ENCODE measurements at regions of chr3 and their contacts with region 1.

Region 1: DNA sequence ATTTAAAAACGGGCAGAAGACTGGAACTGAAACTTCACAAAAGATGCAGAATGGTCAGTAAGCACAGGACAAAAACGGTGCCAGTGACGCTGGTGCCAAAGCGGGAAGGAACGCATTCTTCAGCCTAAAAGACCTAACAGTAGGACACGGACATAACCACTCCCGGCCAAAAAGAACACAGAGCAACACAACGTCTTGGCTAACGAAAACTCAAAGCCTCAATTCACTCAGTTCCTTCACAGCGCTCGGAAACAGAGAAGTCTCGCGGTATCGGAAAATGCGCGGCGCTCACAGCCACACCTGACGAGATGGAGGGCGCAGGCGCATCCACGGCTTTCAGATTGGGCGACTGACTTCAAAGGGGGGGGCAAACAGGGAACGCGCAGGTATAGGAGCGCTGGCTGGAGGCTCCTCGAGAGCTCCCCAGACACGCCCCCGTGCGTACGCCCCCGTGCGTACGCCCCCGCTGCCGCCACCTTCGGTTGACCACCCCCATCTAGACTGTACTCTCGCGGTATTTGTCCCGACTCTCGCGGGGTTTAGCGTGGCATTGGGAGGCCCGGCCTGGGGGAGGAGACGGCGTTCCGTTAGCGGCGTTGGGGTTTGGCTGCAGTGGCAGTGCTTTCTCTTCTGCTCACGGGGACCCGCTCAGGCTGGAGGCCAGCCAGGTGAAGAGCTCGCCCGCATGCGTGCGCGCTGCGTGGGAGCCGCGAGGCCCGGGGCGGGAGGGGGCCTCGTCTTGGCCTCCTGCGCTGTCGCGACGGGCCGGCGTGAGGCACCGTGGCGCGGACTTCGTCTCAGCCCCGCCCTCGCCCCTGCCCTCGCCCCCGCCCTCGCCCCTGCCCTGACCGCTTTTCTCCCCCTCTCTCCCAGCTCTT is at the start of gene NKTR:
- DNase-seq: peak; percentile 99
- ATAC-seq: peak; percentile 90
- total RNA-seq, gene NKTR: 54.1 to 63.9 TPM

Region 2: GRCh38 chr3:42476225-42477125 is 123.9 kb before region 1 on chr3:
- intact Hi-C with region 1: no loop called
- DNase-seq: peak; percentile 66 to 75
- ATAC-seq: peak; percentile 88

Region 3: GRCh38 chr3:42749753-42750231 is 149.4 kb after region 1 on chr3:
- intact Hi-C with region 1: loop called in 1 of 2 experiments (anchors 10 kb)
- DNase-seq: peak in 1 of 2 donors; percentile 25
- ATAC-seq: no peak

Measured in left colon (tissue), 2 donors.